ENCODE measurements at regions of chr16 and their contacts with region 1.

Region 1: GRCh38 chr16:82626791-82627261 is at the start of gene CDH13:
- DNase-seq: peak in 1 of 2 donors; percentile 81
- H3K4me3 ChIP-seq: peak within 1 kb of the TSS; percentile 69 to 94
- H3K27ac ChIP-seq: peak within 1 kb of the TSS; percentile 94 to 97
- H3K4me1 ChIP-seq: peaks cover 5 to 28% of the 10 kb centered on the region in 2 donors
- H3K27me3 ChIP-seq: no peaks in the 10 kb centered on the region
- CTCF ChIP-seq: no peak
- total RNA-seq, gene CDH13: 160 TPM

Region 2: GRCh38 chr16:82603784-82604411 is 22.9 kb before region 1 on chr16:
- intact Hi-C with region 1: loop called (anchors 2 kb)
- DNase-seq: peak in 1 of 2 donors; percentile 80
- H3K4me3 ChIP-seq: no peak overlapping the region
- H3K27ac ChIP-seq: no peak overlapping the region
- H3K4me1 ChIP-seq: no peaks in the 10 kb centered on the region
- H3K27me3 ChIP-seq: no peaks in the 10 kb centered on the region
- CTCF ChIP-seq: peak; percentile 68 to 83 (median 83)

Region 3: DNA sequence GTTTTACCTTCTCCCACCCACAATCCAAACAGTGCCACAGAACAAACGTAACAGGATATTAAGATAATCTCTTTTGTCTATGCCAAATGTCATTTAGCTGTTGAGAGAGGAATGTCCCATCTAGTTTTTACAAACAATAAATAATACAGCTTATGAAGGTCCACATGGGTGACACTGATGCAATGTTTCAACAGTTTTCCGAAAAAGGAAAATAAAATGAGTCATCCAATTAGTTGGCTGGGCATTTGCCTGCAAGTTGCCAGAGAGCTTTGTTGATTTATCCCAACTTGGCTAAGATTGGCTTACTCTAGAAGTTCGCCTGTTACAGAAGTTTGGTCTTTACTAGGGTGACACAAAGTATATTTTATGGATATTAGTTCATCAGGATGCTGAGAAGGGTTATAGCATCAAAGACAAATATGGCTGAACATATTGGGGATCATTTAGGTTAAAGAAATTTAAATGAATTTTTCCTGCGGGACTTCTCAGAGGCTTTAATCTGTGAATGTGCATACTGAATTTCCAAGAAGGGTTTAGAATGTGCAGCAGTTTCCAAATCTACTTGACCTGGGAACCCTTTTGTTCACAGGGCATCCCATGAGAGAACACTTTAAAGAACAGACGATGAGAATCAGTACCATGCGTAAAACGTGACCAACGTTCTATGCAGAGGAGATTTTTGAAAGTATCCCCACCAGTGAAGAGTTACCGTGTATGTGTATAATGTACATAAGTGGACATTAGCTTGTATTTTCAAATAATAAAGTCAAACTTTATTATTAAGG is 73.1 kb after region 1 on chr16:
- intact Hi-C with region 1: loop called (anchors 2 kb)
- DNase-seq: peak in 1 of 2 donors; percentile 73
- H3K4me3 ChIP-seq: no peak overlapping the region
- H3K27ac ChIP-seq: peak overlapping the region; percentile 88 to 89
- H3K4me1 ChIP-seq: peaks cover 11 to 47% of the 10 kb centered on the region in 2 donors
- H3K27me3 ChIP-seq: no peaks in the 10 kb centered on the region
- CTCF ChIP-seq: no peak

Region 4: GRCh38 chr16:82738699-82739098 is 111.9 kb after region 1 on chr16:
- intact Hi-C with region 1: loop called (anchors 2 kb)
- DNase-seq: no peak
- H3K4me3 ChIP-seq: no peak overlapping the region
- H3K27ac ChIP-seq: peak overlapping the region in 1 of 2 donors; percentile 81
- H3K4me1 ChIP-seq: peaks cover 8 to 32% of the 10 kb centered on the region in 2 donors
- H3K27me3 ChIP-seq: no peaks in the 10 kb centered on the region
- CTCF ChIP-seq: peak in 2 of 3 experiments; percentile 28 to 30

Region 5: GRCh38 chr16:82755569-82756282 is 128.9 kb after region 1 on chr16:
- intact Hi-C with region 1: loop called (anchors 2 kb)
- DNase-seq: no peak
- H3K4me3 ChIP-seq: no peak overlapping the region
- H3K27ac ChIP-seq: peak overlapping the region; percentile 74 to 78
- H3K4me1 ChIP-seq: peaks cover 13 to 38% of the 10 kb centered on the region in 2 donors
- H3K27me3 ChIP-seq: no peaks in the 10 kb centered on the region
- CTCF ChIP-seq: no peak

Region 6: DNA sequence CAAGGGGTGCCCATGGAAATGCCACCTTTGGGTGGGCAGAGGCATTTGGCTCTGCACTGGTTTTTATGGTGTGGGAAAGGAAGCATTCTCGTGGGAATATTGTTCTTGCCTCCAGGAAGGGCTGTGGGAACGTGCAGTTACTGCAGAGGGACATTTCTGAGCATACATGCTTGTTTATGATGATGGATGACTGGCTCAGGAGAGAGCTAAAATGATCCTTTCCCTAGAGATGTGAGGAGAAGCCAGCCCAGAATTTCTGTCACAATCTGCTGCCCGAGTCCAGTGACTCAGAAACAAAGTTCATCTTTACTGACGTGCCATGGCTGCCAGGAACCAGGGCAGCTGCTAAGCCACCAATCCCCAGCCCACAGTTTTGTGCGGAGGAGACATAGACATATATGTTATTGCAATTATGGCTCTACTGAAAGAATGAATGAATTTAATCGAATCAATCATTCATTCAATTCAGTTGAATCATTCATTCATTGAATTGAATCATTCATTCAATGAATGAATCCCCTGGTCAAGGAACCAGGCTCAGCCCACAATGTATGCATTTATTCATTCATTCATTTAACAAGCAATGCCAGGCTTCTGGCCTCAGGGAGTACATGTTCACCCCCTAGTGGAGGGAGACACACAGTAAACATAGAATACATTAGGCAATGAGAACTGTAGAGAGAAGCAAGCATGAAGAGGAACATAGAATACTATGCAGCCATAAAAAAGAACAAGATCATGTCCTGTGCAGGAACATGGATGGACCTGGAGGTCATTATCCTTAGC is 766.6 kb after region 1 on chr16:
- intact Hi-C with region 1: loop called (anchors 5 kb)
- DNase-seq: peak; percentile 9 to 81
- H3K4me3 ChIP-seq: no peak overlapping the region
- H3K27ac ChIP-seq: peak overlapping the region; percentile 71 to 75
- H3K4me1 ChIP-seq: peaks cover 3 to 25% of the 10 kb centered on the region in 2 donors
- H3K27me3 ChIP-seq: no peaks in the 10 kb centered on the region
- CTCF ChIP-seq: peak in 1 of 3 experiments; percentile 14